Activated B cell treated with CpG ODN at 0.5 μM for 24 hours (primary cell): ENCODE measurements at regions of chr2 and their contacts with region 1.

Region 1: GRCh38 chr2:127324635-127325034 is 30.7 kb upstream of the ERCC3 start:
- DNase-seq: no peak
- ATAC-seq: no peak
- H3K4me3 Mint-ChIP-seq: no peak overlapping the region
- H3K27ac Mint-ChIP-seq: no peak overlapping the region
- H3K4me1 Mint-ChIP-seq: no peaks in the 10 kb centered on the region
- H3K27me3 Mint-ChIP-seq: no peaks in the 10 kb centered on the region
- CTCF ChIP-seq: no peak

Region 2: DNA sequence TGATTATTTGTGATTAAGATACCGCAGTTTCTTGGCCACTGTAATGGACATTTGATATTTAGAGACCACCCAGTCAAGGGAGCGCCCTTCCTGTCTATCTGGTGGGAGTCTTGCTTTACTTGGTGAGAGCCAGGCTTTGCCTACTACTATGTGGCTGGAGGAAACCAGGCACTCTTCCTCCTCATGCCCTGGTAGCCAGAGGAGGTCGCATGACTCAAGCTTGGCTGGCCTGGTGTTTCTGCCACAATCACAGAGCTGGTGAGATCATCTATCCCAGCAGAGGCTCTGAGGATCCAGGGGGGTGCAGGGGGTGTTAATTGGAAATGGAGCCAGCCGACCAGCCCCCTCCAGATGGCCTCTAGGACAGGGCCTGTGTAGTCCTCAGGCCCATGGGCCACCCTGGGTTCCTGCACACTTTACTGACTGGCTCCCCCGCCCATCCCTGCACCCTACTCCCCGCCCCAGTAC is 170.9 kb before region 1 on chr2:
- CTCF ChIA-PET with region 1: no interaction called
- POLR2A ChIA-PET with region 1: no interaction called
- intact Hi-C with region 1: no loop called
- DNase-seq: no peak
- ATAC-seq: no peak
- H3K4me3 Mint-ChIP-seq: no peak overlapping the region
- H3K27ac Mint-ChIP-seq: no peak overlapping the region
- H3K4me1 Mint-ChIP-seq: peaks cover 18% of the 10 kb centered on the region
- H3K27me3 Mint-ChIP-seq: no peaks in the 10 kb centered on the region
- CTCF ChIP-seq: no peak

Region 3: GRCh38 chr2:127293748-127294562 is 30.7 kb before region 1 on chr2 and contains the start of gene ERCC3:
- CTCF ChIA-PET with region 1: no interaction called
- POLR2A ChIA-PET with region 1: no interaction called
- intact Hi-C with region 1: no loop called
- DNase-seq: peak; percentile 78
- ATAC-seq: peak; percentile 98
- H3K4me3 Mint-ChIP-seq: peak within 1 kb of the TSS; percentile 97
- H3K27ac Mint-ChIP-seq: peak within 1 kb of the TSS; percentile 95
- H3K4me1 Mint-ChIP-seq: peaks cover 25% of the 10 kb centered on the region
- H3K27me3 Mint-ChIP-seq: no peaks in the 10 kb centered on the region
- CTCF ChIP-seq: no peak
- total RNA-seq, gene ERCC3: 55.9 and 65.6 TPM in 2 replicates

Region 4: GRCh38 chr2:127841466-127842178 is 517.0 kb after region 1 on chr2:
- CTCF ChIA-PET with region 1: no interaction called
- POLR2A ChIA-PET with region 1: interaction called, 11 read pairs
- intact Hi-C with region 1: no loop called
- DNase-seq: no peak
- ATAC-seq: no peak
- H3K4me3 Mint-ChIP-seq: no peak overlapping the region
- H3K27ac Mint-ChIP-seq: no peak overlapping the region
- H3K4me1 Mint-ChIP-seq: no peaks in the 10 kb centered on the region
- H3K27me3 Mint-ChIP-seq: no peaks in the 10 kb centered on the region
- CTCF ChIP-seq: no peak